Activated CD4-positive, alpha-beta memory T cell treated with anti-CD3 and anti-CD28 coated beads for 36 hours (primary cell): ENCODE measurements at regions of chr3 and their contacts with region 1.

Region 1: DNA sequence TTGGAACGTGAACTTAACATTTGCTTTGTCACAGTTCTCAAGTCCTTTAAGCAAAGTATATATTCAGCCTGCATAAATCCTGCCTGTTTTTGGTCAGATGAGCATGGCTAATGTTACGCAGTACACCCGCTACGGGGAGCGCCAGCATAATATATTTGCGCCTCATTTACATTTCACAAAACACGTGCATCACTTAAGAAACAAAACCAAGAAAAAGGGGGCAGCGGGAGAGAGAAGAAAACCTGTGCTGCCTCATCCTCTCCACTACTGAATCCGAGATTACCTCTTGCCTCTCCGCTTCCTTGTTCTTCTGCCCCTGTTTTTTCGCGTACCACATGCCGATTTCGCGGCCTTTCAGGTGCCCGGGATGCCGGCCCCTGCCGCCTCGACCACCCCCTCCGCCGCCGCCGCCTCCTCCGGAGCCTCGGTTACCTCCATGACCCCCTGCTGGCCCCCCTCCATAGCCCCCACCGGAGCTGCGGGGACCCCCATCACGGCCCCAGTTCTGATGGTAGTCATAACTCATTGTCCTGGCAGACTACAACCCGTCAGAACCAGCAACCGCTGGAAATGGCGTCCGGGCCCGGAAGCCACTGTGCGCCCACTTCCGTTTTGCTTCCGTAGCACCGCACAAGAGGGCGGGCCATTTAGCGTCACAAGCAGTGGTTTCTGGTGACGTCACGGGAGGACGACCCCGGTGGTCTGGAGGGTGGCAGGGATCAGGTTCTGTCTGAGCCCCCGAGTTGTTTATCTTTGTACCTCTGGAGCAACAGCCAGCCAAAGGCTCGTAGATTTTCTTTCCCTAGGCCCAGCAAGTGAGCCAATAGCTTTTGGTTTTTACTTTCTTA is at the start of gene DHX36:
- DNase-seq: peak; percentile 93
- H3K4me3 Mint-ChIP-seq: peak within 1 kb of the TSS; percentile 85
- H3K27ac Mint-ChIP-seq: peak within 1 kb of the TSS; percentile 96
- H3K4me1 Mint-ChIP-seq: peaks cover 29% of the 10 kb centered on the region
- H3K27me3 Mint-ChIP-seq: no peaks in the 10 kb centered on the region
- total RNA-seq, gene DHX36: 65.5 to 71.1 TPM

Region 2: GRCh38 chr3:154120961-154121700 is 203.0 kb before region 1 on chr3 and contains the start of gene ARHGEF26:
- CTCF ChIA-PET with region 1: no interaction called
- POLR2A ChIA-PET with region 1: no interaction called
- intact Hi-C with region 1: loop called (anchors 2 kb)
- DNase-seq: peak; percentile 86
- H3K4me3 Mint-ChIP-seq: peak within 1 kb of the TSS; percentile 79
- H3K27ac Mint-ChIP-seq: no peak within 1 kb of the TSS
- H3K4me1 Mint-ChIP-seq: peaks cover 22% of the 10 kb centered on the region
- H3K27me3 Mint-ChIP-seq: peaks cover 61% of the 10 kb centered on the region
- total RNA-seq, gene ARHGEF26: 0.24 to 0.34 TPM

Region 3: GRCh38 chr3:154275965-154276364 is 48.1 kb before region 1 on chr3:
- CTCF ChIA-PET with region 1: no interaction called
- POLR2A ChIA-PET with region 1: no interaction called
- intact Hi-C with region 1: loop called (anchors 5 kb)
- DNase-seq: no peak
- H3K4me3 Mint-ChIP-seq: no peak overlapping the region
- H3K27ac Mint-ChIP-seq: no peak overlapping the region
- H3K4me1 Mint-ChIP-seq: no peaks in the 10 kb centered on the region
- H3K27me3 Mint-ChIP-seq: no peaks in the 10 kb centered on the region